ENCODE measurements at regions of chr20 and their contacts with region 1.

Region 1: DNA sequence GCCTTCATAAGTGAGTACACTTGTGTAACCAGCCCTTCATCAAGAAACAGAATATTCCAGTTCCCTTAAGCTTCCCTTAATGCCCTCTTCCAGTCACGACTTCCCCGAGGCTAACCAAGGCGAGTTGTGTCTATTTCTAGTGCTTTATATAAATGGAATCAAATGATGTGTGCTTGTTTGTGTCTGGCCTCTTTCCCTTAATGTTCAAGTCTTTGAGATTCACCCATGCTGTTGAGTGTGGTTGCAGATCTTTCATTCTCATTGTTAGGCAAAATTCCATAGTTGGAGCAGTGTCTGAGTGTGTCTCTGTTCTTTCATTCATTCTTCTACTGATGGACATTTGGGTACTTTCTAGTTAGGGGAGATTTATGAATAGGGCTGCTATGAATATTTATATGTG is 135.0 kb downstream of the CEBPB start:
- DNase-seq: no peak
- H3K4me3 ChIP-seq: no peak overlapping the region
- CTCF ChIP-seq: no peak
- POLR2A ChIP-seq: no peak

Region 2: DNA sequence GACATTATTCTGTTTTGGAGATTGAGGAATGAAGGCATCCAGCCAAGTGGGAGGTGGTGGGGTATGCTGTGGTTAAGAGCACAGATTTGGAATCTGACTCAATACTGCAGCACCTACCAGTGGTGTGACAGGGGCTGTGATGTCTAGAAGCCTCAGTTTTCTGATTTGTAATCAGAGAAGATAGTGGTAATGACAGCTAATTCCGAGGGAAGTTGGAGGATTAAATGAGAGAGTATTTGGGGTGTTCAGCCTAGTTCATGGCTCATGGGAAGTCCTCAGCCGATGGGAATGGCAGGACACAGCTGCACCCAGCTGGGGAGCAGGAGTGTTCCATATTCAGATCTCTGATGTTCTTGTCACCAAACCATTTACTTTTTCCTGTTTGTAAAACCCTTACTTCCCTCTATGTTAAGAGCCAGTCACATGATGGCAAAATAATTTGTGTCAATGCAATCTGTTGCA is 503.8 kb before region 1 on chr20:
- intact Hi-C with region 1: no loop called
- DNase-seq: no peak
- H3K4me3 ChIP-seq: no peak overlapping the region
- CTCF ChIP-seq: no peak
- POLR2A ChIP-seq: no peak

Region 3: GRCh38 chr20:50392138-50392866 is 66.7 kb after region 1 on chr20:
- intact Hi-C with region 1: loop called (anchors 2 kb)
- DNase-seq: no peak
- H3K4me3 ChIP-seq: no peak overlapping the region
- CTCF ChIP-seq: no peak
- POLR2A ChIP-seq: no peak

Measured in lower leg skin (tissue), 4 donors.